ENCODE measurements at regions of chr2 and their contacts with region 1.

Region 1: GRCh38 chr2:55761526-55761925 is 67.9 kb upstream of the PNPT1 start:
- DNase-seq: no peak
- H3K4me3 ChIP-seq: no peak overlapping the region
- CTCF ChIP-seq: no peak
- POLR2A ChIP-seq: no peak

Region 2: DNA sequence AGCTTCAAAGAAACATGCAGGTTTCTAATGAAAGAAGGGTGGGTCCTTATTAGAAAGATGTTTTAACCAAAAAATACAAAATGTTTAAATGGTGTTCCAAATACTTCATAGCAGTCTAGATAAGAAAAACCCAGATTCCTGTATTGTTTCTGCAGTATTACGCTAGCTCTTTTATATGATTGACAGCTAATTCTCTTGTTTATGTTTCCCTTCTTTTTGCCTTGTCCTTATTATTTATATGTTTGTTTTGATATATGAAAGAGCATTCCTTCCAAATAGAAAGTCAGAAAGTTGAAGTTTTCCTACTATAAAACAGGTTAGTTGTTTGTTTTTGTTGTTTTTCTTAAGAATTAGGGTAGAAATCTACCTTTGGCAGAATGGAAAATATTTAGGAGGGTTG is 26.8 kb before region 1 on chr2:
- intact Hi-C with region 1: loop called (anchors 2 kb)
- DNase-seq: no peak
- H3K4me3 ChIP-seq: no peak overlapping the region
- CTCF ChIP-seq: no peak
- POLR2A ChIP-seq: no peak

Measured in lower leg skin (tissue), 4 donors.